AG04449 (cell line): ENCODE measurements at regions of chr5 and their contacts with region 1.

Region 1: DNA sequence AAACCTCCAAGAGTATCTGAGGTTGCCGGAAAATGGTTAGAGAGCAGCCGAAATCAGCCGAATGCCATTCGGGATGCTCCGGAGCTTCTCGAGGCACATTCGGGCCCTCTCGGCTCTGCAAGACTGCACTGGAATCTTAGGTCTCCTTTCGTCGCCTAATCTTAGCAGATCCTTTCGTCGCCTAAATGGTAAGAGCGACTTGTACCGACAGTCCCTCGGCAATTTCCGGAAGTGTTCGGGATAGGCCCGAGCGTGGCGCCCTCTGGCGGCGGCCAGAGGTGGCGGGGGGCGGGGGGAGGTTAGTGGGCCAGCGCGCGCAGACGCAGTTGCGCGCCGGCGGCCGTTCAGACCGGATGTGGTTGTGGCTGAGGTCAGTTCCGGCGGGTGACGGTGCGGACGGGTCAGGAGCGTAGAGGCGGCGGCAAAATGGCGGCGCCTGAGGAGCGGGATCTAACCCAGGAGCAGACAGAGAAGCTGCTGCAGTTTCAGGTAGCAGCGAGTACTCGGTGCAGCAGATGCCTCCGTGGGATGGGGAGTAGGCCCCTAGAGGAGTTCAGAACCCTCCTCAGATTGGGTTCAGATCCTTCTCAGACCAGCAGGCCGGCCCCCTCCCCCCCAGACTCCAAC is at the start of gene FAF2:
- DNase-seq: peak; percentile 98
- H3K4me3 ChIP-seq: peak within 1 kb of the TSS; percentile 100
- CTCF ChIP-seq: peak; percentile 93

Region 2: GRCh38 chr5:176166427-176166826 is 281.7 kb before region 1 on chr5:
- CTCF ChIA-PET with region 1: no interaction called
- POLR2A ChIA-PET with region 1: no interaction called
- DNase-seq: no peak
- H3K4me3 ChIP-seq: no peak overlapping the region
- CTCF ChIP-seq: no peak

Region 3: GRCh38 chr5:176415952-176416924 is 31.9 kb before region 1 on chr5 and contains the start of gene CLTB:
- CTCF ChIA-PET with region 1: interaction called, 51 read pairs
- POLR2A ChIA-PET with region 1: interaction called, 6 read pairs
- DNase-seq: no peak
- H3K4me3 ChIP-seq: peak within 1 kb of the TSS; percentile 72
- CTCF ChIP-seq: peak; percentile 73

Region 4: DNA sequence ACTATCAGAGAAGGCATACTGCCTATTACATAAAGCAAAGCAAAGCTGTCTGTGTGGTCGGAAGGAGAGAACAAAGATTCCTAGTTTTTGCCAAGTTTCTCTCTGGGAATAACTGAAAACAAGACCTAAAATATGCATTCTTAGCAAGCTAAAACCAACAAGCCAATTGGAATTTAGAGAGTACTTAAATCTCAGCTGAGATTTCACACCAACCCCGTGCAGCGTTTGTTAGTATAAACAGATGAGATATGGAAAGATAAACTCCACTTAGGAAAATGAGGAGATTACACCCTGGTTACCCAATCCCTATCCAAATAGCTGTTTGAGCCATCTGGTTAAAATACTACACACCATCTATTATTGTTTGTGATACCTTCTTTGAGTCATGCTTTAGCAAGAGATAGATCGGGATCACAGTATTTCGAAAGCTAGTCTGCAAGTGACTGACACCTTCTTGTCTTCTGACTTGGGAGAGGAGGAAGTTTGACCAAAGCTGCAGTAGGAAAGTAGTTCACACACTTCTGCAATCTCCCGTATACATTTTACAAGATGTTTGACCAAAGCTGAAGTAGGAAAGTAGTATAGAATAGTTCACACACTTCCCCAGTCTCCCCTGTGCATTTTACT is 18.3 kb after region 1 on chr5:
- CTCF ChIA-PET with region 1: interaction called, 97 read pairs
- POLR2A ChIA-PET with region 1: interaction called, 3 read pairs
- DNase-seq: peak; percentile 58
- H3K4me3 ChIP-seq: no peak overlapping the region
- CTCF ChIP-seq: no peak

Region 5: DNA sequence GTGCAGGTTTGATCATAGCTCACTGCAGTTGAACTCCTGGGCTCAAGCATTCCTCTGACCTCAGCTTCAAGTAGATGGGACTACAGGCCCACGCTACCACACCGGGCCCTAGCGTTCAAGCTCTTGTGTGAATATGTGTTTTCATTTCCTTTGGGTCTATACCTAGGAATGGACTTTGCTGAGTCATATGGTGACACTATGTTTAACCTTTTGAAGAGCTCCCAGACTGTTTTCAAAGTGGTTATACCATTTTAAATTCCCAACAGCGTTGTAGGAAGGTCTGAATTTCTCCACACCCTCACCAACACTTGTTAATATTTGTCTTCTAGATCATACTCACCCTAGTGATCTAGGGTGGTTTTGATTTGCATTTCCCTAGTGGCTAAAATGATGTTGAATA is 33.6 kb after region 1 on chr5:
- CTCF ChIA-PET with region 1: interaction called, 23 read pairs
- POLR2A ChIA-PET with region 1: no interaction called
- DNase-seq: no peak
- H3K4me3 ChIP-seq: no peak overlapping the region
- CTCF ChIP-seq: no peak

Region 6: DNA sequence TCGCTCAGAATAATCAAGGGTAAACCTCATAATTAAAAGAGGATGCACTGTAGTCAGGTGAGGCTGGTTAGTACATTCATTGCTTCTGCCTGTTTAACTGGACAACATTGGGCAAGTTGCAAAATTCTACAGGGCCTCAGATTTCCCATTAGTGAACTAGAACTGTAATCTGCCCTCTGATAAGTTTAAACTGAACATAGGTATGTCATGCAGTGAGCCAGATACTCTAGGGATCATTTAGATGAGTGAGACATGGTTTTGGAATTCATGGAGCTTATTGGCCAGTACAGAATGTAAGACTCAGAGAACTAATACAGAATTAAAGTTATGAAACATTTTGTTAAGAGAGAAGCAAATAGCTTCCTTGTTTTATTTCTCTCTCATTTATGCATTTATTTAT is 53.2 kb after region 1 on chr5:
- CTCF ChIA-PET with region 1: interaction called, 10 read pairs
- POLR2A ChIA-PET with region 1: no interaction called
- DNase-seq: peak; percentile 87
- H3K4me3 ChIP-seq: no peak overlapping the region
- CTCF ChIP-seq: no peak

Region 7: DNA sequence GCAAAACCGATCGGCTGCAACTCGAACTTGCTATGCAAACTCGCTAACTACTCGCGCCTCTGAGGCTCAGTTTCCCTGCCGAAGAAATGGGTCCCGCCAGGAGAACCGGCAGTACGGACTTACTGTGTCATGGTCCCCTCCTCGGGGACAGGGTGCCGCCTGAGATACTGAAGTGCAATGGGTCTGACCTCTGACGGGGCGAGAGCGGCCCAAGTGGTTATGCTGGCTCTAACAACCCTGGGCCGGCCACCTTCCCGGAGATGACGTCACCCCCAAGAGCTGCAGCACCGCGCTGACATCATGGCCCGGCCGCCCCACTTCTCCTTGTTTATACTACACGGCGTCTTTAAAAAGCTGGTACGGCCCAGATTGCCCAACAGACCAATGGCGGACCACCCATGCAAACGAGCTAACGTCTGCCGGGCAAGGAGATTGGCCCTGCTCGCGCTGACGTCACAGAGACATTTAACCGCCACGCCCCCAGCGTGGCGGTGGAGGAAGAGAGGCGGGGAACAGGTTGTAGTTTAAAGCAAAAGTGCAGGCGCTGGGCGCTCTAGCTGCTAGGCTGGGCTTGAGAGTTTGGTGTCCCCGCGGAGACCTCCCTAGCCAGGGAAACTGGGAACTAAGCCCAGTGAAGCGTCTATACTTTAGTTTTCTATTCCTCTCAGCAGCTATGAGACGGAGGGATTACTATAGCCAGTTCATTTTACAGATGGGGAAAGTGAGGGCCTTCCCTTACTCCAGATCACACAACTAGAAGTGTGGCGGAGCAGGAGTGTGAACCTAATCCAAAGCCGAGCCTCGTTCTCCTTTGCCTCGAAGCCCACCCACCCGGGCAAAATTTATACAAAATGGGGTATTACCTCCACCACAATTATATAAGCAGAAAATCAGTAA is 89.8 kb after region 1 on chr5:
- CTCF ChIA-PET with region 1: interaction called, 28 read pairs
- POLR2A ChIA-PET with region 1: interaction called, 6 read pairs
- DNase-seq: peak; percentile 97
- H3K4me3 ChIP-seq: peak overlapping the region; percentile 99
- CTCF ChIP-seq: no peak

Region 8: GRCh38 chr5:176647030-176647866 is 199.2 kb after region 1 on chr5 and contains the start of gene TSPAN17:
- CTCF ChIA-PET with region 1: no interaction called
- POLR2A ChIA-PET with region 1: no interaction called
- DNase-seq: peak; percentile 84
- H3K4me3 ChIP-seq: peak within 1 kb of the TSS; percentile 81
- CTCF ChIP-seq: peak; percentile 46